ENCODE measurements at regions of chr1 and their contacts with region 1.

Region 1: DNA sequence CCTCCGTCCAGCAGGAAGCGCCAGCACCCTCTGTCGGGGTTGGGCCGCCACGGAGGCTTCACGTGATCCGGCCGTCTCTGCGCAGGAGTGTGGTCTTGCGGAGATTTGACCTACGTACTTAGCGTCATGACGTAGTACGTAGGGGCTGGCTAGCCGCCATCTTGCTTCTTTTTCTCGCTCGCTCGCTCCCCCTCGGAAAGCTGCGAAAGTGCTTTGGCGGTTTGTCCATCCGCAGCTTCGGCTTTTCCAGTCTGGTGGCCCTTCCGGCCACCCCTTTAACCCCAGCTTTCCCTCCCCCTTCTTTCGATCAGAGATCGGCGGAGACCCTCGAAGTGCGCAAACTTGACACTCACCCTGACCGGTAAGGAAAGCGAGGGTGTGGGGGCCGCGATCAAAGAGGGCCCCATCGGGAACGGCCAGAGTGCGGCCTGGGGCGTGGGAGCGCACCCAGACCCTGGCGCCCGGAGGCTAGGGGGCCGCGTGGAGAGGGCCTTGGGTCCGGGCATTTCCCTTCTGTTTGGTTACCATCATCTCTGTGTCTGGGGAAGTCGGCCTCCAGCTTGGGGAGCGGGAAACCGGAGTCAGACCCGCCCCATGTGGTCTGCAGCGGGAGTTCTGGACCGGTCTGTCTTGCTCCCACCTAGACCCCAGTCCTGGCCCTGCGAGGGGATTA is at the start of gene PRRC2C:
- DNase-seq: peak; percentile 87 to 99 (median 93)
- ATAC-seq: peak; percentile 81
- H3K4me3 ChIP-seq: peak within 1 kb of the TSS; percentile 85
- H3K4me3 Mint-ChIP-seq: peak within 1 kb of the TSS; percentile 95
- H3K27ac ChIP-seq: peak within 1 kb of the TSS; percentile 100
- H3K27ac Mint-ChIP-seq: peak within 1 kb of the TSS; percentile 95
- H3K4me1 ChIP-seq: peaks cover 30% of the 10 kb centered on the region
- H3K4me1 Mint-ChIP-seq: peaks cover 50% of the 10 kb centered on the region
- H3K27me3 ChIP-seq: no peaks in the 10 kb centered on the region
- H3K27me3 Mint-ChIP-seq: no peaks in the 10 kb centered on the region
- CTCF ChIP-seq: peak; percentile 47
- total RNA-seq, gene PRRC2C: 357 to 387 TPM

Region 2: DNA sequence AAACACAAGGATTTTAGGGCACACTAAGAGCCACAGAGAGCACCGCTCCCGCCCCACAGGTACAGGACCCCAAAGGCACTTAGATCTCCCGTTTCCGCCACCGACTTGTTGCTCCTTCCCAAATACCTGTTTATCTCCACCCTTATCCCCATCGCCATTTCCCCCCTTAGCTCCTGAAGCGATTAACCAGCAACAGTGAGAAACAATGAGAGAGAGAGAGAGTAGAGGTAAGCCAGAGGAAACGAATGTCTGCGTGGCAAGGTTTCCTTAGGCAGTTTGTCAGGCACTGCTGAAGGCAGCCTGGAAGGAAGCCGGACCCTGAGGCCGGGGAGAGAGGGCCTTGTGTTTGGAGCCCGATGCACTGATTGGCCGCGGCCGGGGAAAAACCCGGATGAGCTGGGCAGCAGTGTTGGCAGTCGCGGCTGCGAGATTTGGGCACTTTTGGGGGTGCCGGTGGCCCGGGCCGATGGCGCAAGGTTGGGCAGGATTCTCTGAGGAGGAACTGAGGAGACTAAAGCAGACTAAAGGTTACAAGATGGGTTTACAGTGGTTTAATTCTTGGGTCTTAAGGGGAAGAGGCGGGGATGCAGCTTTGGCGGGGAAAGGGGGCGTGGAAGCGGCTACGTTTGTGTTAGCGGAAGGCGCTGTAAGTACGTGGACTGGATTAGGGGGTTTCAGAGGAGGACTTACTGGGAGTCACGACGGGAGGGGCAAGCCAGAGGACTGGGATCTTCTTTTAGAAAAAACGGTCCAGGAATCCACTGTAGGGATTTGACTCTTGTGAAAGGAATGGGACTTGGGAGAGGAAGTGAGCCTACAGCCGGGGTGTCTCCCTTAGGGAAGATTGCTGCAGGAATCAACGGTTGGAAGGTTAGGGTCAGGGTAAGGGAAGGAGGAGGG is 953.5 kb before region 1 on chr1 and contains the start of gene GORAB:
- CTCF ChIA-PET with region 1: no interaction called
- POLR2A ChIA-PET with region 1: interaction called, 9 read pairs
- intact Hi-C with region 1: loop called in 1 of 2 experiments (anchors 10 kb)
- DNase-seq: peak; percentile 69 to 92 (median 78)
- ATAC-seq: peak; percentile 91
- H3K4me3 ChIP-seq: peak within 1 kb of the TSS; percentile 61
- H3K4me3 Mint-ChIP-seq: no peak within 1 kb of the TSS
- H3K27ac ChIP-seq: peak within 1 kb of the TSS; percentile 73 to 86
- H3K27ac Mint-ChIP-seq: no peak within 1 kb of the TSS
- H3K4me1 ChIP-seq: peaks cover 12% of the 10 kb centered on the region
- H3K4me1 Mint-ChIP-seq: peaks cover 20% of the 10 kb centered on the region
- H3K27me3 ChIP-seq: no peaks in the 10 kb centered on the region
- H3K27me3 Mint-ChIP-seq: no peaks in the 10 kb centered on the region
- CTCF ChIP-seq: no peak
- total RNA-seq, gene GORAB: 23.0 to 26.6 TPM

Region 3: GRCh38 chr1:171420810-171421209 is 64.7 kb before region 1 on chr1:
- CTCF ChIA-PET with region 1: no interaction called
- POLR2A ChIA-PET with region 1: interaction called, 11 read pairs
- intact Hi-C with region 1: no loop called
- DNase-seq: peak in 3 of 14 experiments; percentile 16 to 48 (median 28)
- ATAC-seq: peak; percentile 68
- H3K4me3 ChIP-seq: no peak overlapping the region
- H3K4me3 Mint-ChIP-seq: peak overlapping the region; percentile 64
- H3K27ac ChIP-seq: peak overlapping the region in 1 of 2 donors; percentile 63
- H3K27ac Mint-ChIP-seq: peak overlapping the region; percentile 59
- H3K4me1 ChIP-seq: peaks cover 13% of the 10 kb centered on the region
- H3K4me1 Mint-ChIP-seq: peaks cover 26% of the 10 kb centered on the region
- H3K27me3 ChIP-seq: no peaks in the 10 kb centered on the region
- H3K27me3 Mint-ChIP-seq: no peaks in the 10 kb centered on the region
- CTCF ChIP-seq: no peak

Region 4: GRCh38 chr1:171506525-171507304 is 21.2 kb after region 1 on chr1:
- CTCF ChIA-PET with region 1: interaction called, 25 read pairs
- POLR2A ChIA-PET with region 1: interaction called, 14 read pairs
- intact Hi-C with region 1: no loop called
- DNase-seq: no peak
- ATAC-seq: no peak
- H3K4me3 ChIP-seq: no peak overlapping the region
- H3K4me3 Mint-ChIP-seq: peak overlapping the region; percentile 63
- H3K27ac ChIP-seq: no peak overlapping the region
- H3K27ac Mint-ChIP-seq: peak overlapping the region; percentile 8
- H3K4me1 ChIP-seq: peaks cover 46% of the 10 kb centered on the region
- H3K4me1 Mint-ChIP-seq: peaks cover 95% of the 10 kb centered on the region
- H3K27me3 ChIP-seq: no peaks in the 10 kb centered on the region
- H3K27me3 Mint-ChIP-seq: no peaks in the 10 kb centered on the region
- CTCF ChIP-seq: no peak

Region 5: GRCh38 chr1:171530676-171531075 is 45.2 kb after region 1 on chr1:
- CTCF ChIA-PET with region 1: interaction called, 16 read pairs
- POLR2A ChIA-PET with region 1: interaction called, 7 read pairs
- intact Hi-C with region 1: no loop called
- DNase-seq: no peak
- ATAC-seq: no peak
- H3K4me3 ChIP-seq: no peak overlapping the region
- H3K4me3 Mint-ChIP-seq: no peak overlapping the region
- H3K27ac ChIP-seq: no peak overlapping the region
- H3K27ac Mint-ChIP-seq: no peak overlapping the region
- H3K4me1 ChIP-seq: no peaks in the 10 kb centered on the region
- H3K4me1 Mint-ChIP-seq: no peaks in the 10 kb centered on the region
- H3K27me3 ChIP-seq: no peaks in the 10 kb centered on the region
- H3K27me3 Mint-ChIP-seq: no peaks in the 10 kb centered on the region
- CTCF ChIP-seq: no peak

Region 6: DNA sequence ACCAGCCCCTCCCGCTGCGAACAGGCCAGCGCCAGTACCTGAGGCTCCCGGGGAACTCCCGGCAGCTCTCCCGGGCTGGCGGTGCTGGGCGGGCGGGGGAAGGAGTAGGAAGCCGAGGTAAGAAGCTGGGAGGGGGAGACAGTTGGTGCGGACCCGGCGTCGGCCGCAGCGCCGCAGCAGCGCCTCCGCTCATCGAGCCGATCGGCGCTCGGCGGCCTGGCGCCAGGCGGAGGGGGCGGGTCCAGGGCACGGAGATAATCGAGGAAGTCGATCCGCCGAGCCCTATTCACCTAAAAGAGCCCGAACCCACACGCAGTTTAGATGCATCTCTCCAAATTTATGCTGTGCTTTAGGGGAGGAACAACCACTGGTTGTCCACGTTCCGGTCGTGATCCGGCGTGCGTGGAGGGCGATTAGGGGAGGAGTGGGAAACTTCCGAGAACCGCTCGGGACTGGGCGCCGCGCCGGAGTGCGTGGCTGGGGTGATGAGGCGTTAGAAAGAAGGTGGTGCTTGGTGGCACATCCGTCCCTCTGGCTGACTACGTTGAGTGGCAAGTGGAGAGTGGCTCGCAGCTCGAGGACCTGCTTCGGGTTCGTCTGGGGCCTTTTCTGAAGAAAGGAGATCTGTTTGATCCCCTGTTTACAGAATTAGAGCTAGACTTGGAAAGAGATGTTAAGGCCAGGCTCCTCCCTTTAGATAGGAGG is 256.5 kb after region 1 on chr1 and contains the start of gene VAMP4:
- CTCF ChIA-PET with region 1: interaction called, 5 read pairs
- POLR2A ChIA-PET with region 1: interaction called, 30 read pairs
- intact Hi-C with region 1: loop called (anchors 5 kb)
- DNase-seq: peak; percentile 77 to 94 (median 84)
- ATAC-seq: peak; percentile 88
- H3K4me3 ChIP-seq: peak within 1 kb of the TSS; percentile 80
- H3K4me3 Mint-ChIP-seq: peak within 1 kb of the TSS; percentile 99
- H3K27ac ChIP-seq: peak within 1 kb of the TSS; percentile 95 to 96
- H3K27ac Mint-ChIP-seq: peak within 1 kb of the TSS; percentile 100
- H3K4me1 ChIP-seq: peaks cover 28% of the 10 kb centered on the region
- H3K4me1 Mint-ChIP-seq: peaks cover 63% of the 10 kb centered on the region
- H3K27me3 ChIP-seq: no peaks in the 10 kb centered on the region
- H3K27me3 Mint-ChIP-seq: no peaks in the 10 kb centered on the region
- CTCF ChIP-seq: no peak
- total RNA-seq, gene VAMP4: 8.1 to 12.1 TPM

Region 7: GRCh38 chr1:171841050-171841940 is 355.8 kb after region 1 on chr1 and contains the start of gene DNM3:
- CTCF ChIA-PET with region 1: no interaction called
- POLR2A ChIA-PET with region 1: interaction called, 6 read pairs
- intact Hi-C with region 1: loop called (anchors 5 kb)
- DNase-seq: peak; percentile 54 to 90 (median 75)
- ATAC-seq: peak; percentile 94
- H3K4me3 ChIP-seq: peak within 1 kb of the TSS; percentile 80
- H3K4me3 Mint-ChIP-seq: peak within 1 kb of the TSS; percentile 94
- H3K27ac ChIP-seq: no peak within 1 kb of the TSS
- H3K27ac Mint-ChIP-seq: peak within 1 kb of the TSS; percentile 69
- H3K4me1 ChIP-seq: peaks cover 17% of the 10 kb centered on the region
- H3K4me1 Mint-ChIP-seq: peaks cover 18% of the 10 kb centered on the region
- H3K27me3 ChIP-seq: peaks cover 4 to 10% of the 10 kb centered on the region in 2 experiments
- H3K27me3 Mint-ChIP-seq: peaks cover 5% of the 10 kb centered on the region
- CTCF ChIP-seq: no peak
- total RNA-seq, gene DNM3: 1.6 to 1.8 TPM

Measured in CD4-positive, alpha-beta T cell (primary cell).